Cardiac septum (tissue), 1 donor: ENCODE measurements at regions of chr9 and their contacts with region 1.

Region 1: DNA sequence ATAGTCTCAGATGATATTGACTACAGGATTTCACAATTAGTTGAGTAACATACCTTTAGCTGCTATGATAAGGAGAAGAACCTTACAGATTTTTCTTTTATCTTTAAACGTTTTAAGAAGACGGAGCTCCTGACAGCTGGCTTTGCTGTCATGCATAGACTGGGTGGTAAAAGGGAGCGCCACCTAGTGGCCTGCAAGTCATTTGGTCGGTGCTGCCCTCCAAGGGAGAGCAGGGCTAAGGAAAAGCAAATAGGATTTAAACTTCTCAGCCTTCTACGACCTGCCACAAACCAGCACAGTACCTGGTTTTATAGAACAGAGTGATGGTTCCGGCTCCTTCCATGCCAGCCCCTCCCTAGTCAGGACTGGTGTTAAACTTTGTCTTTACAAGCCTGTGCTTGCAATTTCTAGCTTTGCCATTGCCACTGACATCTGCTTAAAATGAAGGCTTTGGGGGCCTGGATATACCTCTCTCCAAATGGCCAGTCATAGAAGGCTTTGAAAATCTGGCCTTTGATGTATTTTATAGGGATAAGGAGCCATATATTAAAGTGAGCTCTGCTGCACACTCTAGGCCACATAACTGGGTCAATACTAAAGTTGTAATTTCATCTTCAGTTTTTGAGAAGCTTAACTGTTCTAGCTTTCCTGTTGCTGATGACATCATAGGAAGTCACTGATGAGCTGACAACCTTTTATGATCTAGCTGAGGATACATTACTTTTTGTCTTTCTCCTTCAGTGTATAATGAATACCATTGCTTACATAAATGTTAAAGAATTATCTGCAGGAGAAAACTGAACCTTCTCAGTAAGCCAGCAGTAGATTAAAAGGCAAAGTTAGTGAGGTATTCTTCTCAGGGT is 31.1 kb upstream of the ADAMTSL1 start:
- DNase-seq: peak; percentile 81

Region 2: DNA sequence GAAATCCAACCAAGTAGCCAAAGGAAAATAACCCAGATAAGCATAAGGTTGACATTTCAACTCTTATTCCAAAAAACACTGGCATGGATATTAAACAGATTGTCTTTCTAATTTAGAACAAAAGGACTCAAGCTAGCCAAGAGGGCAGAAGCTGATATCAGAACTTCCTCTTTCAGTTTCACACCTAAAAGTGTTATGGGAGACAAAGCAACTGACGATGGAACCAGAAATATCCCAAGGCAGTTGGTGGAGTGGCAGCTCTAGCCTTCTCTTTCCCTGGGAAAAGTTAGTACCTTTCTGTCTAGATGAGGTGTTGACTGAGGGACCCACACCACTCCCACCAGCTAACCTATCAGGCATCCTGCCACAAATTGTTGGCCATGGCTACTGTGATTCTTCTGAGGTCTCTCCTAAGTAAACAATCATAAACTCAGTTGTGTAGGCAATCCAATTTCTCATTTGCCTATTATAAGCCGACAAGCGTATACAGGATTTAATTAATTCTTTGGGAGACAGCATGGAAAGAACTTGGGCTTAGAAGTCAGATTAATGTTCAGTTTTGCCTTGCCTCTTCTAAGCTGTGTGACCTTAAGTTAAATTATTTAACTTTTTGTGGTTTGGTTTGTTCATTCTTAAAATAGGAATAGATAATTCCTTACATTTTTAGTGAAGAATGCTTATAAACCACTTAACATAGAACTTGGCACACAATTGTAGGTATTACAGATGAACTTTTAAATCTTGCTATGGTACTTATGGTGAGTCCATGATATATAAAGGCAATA is 79.8 kb before region 1 on chr9:
- intact Hi-C with region 1: loop called (anchors 2 kb)
- DNase-seq: no peak

Region 3: GRCh38 chr9:18861609-18862544 is 419.0 kb after region 1 on chr9:
- intact Hi-C with region 1: loop called (anchors 5 kb)
- DNase-seq: peak; percentile 81

Region 4: GRCh38 chr9:19028835-19029451 is 586.1 kb after region 1 on chr9:
- intact Hi-C with region 1: loop called (anchors 10 kb)
- DNase-seq: no peak